Dendritic cell treated with granulocyte-macrophage colony-stimulating factor and Interleukin-4, amounts not matched to agents 40 ng/mL and 50 ng/mL, for 4 days (primary cell): ENCODE measurements at regions of chr20 and their contacts with region 1.

Region 1: GRCh38 chr20:63955827-63956663 is at the start of gene UCKL1:
- H3K4me3 Mint-ChIP-seq: peak within 1 kb of the TSS; percentile 84
- H3K27ac Mint-ChIP-seq: peak within 1 kb of the TSS; percentile 84
- H3K4me1 Mint-ChIP-seq: peaks cover 54% of the 10 kb centered on the region
- H3K27me3 Mint-ChIP-seq: peaks cover 2% of the 10 kb centered on the region

Region 2: GRCh38 chr20:63942250-63942959 is 13.6 kb before region 1 on chr20:
- intact Hi-C with region 1: loop called (anchors 1 kb)
- H3K4me3 Mint-ChIP-seq: peak overlapping the region; percentile 51
- H3K27ac Mint-ChIP-seq: peak overlapping the region; percentile 61
- H3K4me1 Mint-ChIP-seq: peaks cover 53% of the 10 kb centered on the region
- H3K27me3 Mint-ChIP-seq: no peaks in the 10 kb centered on the region